Motor neuron (in vitro differentiated cells): ENCODE measurements at regions of chr1 and their contacts with region 1.

Region 1: DNA sequence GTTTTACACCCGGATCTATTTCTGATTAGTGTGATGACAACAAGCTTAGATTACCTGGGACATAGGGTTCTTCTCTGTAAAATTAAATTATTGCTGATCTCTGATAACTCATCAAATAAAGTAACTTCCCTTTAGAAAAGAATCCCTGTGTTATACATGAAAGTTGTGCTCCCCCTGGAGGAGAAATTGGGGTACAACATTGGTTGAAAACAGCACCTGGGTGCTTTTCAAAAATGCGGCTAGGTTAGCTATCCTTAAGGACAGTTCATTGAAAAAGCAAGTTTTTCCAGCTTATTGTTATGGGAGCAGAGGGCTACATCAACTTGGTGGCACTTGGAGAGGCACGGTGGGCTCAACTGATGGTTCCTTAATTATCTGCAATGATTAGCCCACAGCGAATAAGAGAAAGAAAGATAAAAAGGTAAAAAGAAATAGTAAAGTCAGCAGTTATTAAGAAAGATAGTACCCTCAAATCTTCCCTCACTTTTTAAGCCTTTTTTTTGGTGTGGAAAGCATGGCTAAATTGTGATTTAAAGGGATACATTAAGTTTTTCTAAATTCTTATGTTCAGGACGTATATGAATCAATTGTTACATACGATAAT is 97.8 kb downstream of the FMN2 start:
- ATAC-seq: no peak
- H3K4me3 ChIP-seq: no peak overlapping the region
- H3K27ac ChIP-seq: no peak overlapping the region
- H3K4me1 ChIP-seq: peaks cover 0 to 3% of the 10 kb centered on the region in 2 donors

Region 2: DNA sequence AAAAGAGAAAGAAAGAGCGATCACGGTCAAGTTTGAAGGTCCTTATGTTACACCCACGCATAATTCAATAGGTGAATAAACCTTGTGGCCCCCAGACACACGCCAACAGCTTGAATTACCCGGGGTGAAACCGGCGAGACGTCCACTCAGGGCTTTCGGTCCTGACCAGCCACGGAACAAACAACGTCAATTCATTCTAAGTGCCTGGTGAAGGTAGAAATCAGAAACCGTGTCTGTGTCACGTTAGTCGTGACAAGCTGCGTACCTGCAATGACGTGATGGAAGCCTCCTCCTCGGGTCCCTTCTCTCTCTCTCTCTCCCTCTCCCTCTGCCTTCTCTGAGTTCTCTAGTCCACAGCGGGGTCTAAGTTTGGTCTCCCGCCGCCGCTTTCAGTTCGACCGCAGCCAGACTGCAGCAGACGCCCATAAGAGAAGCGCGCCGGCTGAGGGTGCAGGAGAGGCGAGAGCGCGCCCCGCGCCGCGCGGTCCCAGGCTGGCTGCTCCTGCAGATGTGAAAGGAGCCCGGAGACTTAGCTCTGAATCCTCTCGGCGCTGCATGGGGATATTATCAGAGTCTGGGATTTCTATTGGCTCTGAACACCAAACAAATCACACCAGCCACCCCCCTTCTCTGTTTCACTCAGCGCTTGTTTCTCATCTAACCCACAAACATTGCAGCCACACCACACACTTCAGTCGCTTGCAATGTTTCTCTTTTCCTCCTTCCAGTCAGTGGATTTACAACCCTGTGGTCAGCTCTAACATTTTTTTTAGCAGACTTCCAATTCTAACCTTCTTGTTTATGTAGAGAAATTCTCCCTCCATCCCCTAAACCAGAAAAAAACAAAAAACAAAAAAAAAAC is 422.4 kb after region 1 on chr1 and contains the start of gene GREM2:
- in situ Hi-C with region 1: loop called in 1 of 9 experiments (anchors 25 kb)
- ATAC-seq: peak; percentile 72 to 94 (median 92)
- H3K4me3 ChIP-seq: peak within 1 kb of the TSS; percentile 39 to 59 (median 43)
- H3K27ac ChIP-seq: peak within 1 kb of the TSS in 1 of 2 donors; percentile 56
- H3K4me1 ChIP-seq: peaks cover 19 to 49% of the 10 kb centered on the region in 2 donors
- total RNA-seq, gene GREM2: 0.10 to 13.9 (median 2.0) TPM in 7 of 8 experiments, not detected in the other